ENCODE measurements at regions of chr6 and their contacts with region 1.

Region 1: DNA sequence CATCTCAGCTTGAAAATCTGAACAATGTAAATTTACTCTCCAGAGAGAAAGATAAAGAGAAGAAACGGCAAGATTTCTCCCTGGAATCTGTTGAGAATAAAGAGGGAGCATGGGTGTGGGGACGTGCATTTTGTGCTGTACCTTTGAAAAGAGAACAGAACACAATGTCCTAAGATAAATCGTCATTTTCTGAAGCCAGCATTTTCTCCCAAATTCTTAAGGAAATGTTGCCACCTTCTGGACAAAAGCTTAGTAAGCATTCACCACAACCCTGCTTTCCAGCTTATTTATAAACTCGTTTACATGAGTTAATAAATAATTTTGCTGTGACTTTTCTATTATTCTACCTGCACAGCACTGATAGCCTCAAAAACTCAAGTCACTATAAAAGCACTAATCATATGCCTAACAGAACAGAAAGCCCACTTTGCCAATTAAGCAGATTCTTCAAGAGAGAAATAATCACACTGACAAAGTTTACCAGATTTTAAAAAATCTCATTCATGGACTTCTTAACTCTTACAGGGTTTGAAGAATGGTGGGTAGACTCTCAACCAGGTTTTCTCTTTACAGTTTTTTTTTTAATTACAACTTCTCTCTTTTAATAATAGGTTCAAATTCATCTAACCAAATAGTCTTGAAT is 155.8 kb downstream of the MBOAT1 start:
- DNase-seq: no peak
- ATAC-seq: peak in 1 of 2 donors; percentile 71
- H3K4me3 ChIP-seq: no peak overlapping the region
- H3K27ac ChIP-seq: no peak overlapping the region
- H3K4me1 ChIP-seq: no peaks in the 10 kb centered on the region
- H3K27me3 ChIP-seq: no peaks in the 10 kb centered on the region

Region 2: GRCh38 chr6:18595774-18596530 is 1460.5 kb before region 1 on chr6:
- intact Hi-C with region 1: loop called in 3 of 4 experiments (anchors 5 to 10 kb)
- DNase-seq: peak in 1 of 3 donors; percentile 31
- ATAC-seq: peak; percentile 89 to 92
- H3K4me3 ChIP-seq: no peak overlapping the region
- H3K27ac ChIP-seq: no peak overlapping the region
- H3K4me1 ChIP-seq: peaks cover 2% of the 10 kb centered on the region
- H3K27me3 ChIP-seq: no peaks in the 10 kb centered on the region

Region 3: DNA sequence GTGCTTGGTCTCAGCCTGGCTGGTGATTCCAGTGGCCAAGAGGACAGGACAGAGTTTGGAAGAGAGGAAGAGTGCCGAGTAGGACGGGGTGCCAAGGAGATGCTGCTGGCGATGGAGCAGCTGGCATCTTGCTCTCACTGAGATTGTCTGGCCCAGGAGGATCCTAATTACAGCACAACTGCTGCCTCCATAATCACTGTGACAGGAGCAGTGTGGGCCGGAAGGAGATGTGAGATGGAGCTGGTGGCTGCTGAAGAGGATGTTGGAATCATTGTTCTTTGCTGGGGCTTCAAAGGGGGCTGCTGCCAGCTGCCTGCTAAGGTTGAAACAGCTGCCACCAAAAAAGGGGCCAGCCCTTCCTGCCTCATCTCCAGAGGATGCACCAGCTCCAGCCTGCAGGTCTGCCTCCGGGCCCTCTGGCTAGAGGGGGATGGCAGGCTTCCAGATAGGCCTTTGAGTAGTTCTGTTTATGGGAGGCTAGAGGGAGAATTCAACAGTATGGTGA is 1454.9 kb before region 1 on chr6:
- intact Hi-C with region 1: loop called in 3 of 4 experiments (anchors 5 to 10 kb)
- DNase-seq: no peak
- ATAC-seq: no peak
- H3K4me3 ChIP-seq: no peak overlapping the region
- H3K27ac ChIP-seq: no peak overlapping the region
- H3K4me1 ChIP-seq: peaks cover 2% of the 10 kb centered on the region
- H3K27me3 ChIP-seq: no peaks in the 10 kb centered on the region

Region 4: DNA sequence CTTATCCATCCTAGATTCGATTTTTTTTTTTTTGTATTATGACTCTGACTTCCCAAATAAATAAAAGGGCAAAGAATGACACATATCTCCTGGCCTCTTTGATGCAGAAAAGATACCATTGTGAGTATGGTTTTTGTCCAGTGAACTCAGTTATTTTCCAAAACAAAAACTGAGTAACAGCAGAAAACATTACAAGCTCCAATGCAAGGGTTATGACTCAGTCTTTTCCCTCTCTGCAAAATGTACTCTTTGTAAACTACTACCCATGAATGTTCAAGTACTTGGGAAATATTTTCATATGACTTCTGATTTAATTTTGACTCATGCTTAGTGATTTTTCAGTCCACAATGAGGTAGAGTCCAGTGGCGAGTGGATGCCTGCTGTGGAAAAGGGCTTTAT is 1314.1 kb before region 1 on chr6:
- intact Hi-C with region 1: loop called in 2 of 4 experiments (anchors 10 kb)
- DNase-seq: no peak
- ATAC-seq: no peak
- H3K4me3 ChIP-seq: no peak overlapping the region
- H3K27ac ChIP-seq: no peak overlapping the region
- H3K4me1 ChIP-seq: no peaks in the 10 kb centered on the region
- H3K27me3 ChIP-seq: no peaks in the 10 kb centered on the region

Region 5: GRCh38 chr6:19851241-19852089 is 205.0 kb before region 1 on chr6:
- intact Hi-C with region 1: no loop called
- DNase-seq: no peak
- ATAC-seq: peak; percentile 92 to 93
- H3K4me3 ChIP-seq: peak overlapping the region; percentile 7
- H3K27ac ChIP-seq: peak overlapping the region; percentile 21
- H3K4me1 ChIP-seq: no peaks in the 10 kb centered on the region
- H3K27me3 ChIP-seq: no peaks in the 10 kb centered on the region

Region 6: DNA sequence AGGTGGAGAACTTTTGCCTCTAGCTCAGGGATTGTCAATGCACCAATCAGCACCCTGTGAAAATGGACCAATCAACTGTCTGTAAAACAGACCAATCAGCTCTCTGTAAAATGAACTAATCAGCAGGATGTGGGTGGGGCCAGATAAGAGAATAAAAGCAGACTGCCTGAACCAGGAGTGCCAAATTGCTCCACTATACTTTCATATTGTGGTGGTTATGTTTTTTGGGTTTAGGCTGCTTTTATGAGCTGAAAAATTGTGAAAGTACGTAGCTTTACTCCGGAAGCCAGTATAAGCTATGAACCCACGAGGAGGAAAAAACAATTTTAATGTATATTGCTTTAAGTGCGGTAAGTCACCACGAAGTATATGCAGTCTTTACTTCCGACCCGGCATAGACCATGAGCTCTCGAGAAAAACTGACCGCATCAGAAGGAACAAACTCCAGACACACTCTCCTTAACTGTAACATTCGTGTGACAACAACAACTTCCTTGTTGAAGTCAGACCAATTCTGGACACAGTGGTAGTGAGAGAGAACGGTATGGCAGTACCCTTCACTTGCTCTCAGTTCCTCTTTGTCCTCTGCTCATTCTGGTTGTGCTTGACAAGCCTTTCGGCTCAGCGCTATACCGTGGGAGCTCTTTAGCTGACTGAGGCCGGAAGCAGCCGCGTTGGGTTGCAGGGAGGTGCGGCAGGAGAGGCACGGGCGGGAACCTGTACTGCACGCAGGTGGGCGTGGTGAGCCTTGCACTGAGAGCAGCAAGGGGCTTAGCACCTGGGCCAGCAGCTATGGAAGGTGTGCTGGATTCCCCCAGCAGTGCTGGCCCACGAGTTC is 263.3 kb after region 1 on chr6:
- intact Hi-C with region 1: no loop called
- DNase-seq: peak; percentile 26 to 78 (median 69)
- ATAC-seq: peak; percentile 80 to 81
- H3K4me3 ChIP-seq: no peak overlapping the region
- H3K27ac ChIP-seq: no peak overlapping the region
- H3K4me1 ChIP-seq: no peaks in the 10 kb centered on the region
- H3K27me3 ChIP-seq: no peaks in the 10 kb centered on the region